Mammary epithelial cell (primary cell): ENCODE measurements at regions of chr18 and their contacts with region 1.

Region 1: DNA sequence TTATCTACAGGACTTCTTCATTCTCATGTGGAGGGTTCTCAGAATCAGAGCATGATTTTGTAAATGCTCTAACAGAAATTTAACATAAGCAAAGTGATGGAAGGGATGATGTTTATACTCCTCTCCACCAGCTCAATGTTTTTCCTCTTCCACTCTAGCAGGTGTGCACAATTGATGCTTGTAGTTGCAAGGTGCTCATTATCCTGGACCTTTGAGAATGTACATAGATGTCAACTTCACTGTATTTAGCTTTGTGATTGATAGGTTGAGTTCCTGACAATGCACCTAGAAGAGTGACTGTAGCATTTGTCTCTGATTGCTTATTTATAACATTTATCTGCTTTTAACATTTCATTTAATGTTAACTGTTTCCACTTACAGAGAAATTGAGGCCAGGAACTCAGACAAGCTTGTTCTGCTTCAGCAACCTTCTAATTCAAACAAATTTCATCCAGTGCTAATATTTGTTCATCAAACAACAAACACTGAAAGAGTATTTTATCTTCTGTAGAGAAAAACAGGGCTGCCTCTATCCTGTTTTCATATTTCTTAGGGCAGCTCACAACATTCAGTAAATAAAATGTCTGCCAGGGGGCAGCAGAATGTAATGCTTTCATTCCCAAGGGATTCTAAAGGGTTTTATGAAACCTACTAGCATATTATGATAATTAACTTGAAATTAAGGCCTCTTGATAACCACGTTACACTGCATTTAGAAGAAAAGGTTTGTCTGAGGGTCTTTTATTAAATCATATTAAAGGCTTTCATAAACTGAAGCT is 127.9 kb upstream of the NOL4 start:
- DNase-seq: no peak
- H3K4me3 ChIP-seq: no peak overlapping the region
- H3K27ac ChIP-seq: no peak overlapping the region
- H3K4me1 ChIP-seq: no peaks in the 10 kb centered on the region
- H3K27me3 ChIP-seq: no peaks in the 10 kb centered on the region
- CTCF ChIP-seq: peak in 1 of 2 donors; percentile 23

Region 2: DNA sequence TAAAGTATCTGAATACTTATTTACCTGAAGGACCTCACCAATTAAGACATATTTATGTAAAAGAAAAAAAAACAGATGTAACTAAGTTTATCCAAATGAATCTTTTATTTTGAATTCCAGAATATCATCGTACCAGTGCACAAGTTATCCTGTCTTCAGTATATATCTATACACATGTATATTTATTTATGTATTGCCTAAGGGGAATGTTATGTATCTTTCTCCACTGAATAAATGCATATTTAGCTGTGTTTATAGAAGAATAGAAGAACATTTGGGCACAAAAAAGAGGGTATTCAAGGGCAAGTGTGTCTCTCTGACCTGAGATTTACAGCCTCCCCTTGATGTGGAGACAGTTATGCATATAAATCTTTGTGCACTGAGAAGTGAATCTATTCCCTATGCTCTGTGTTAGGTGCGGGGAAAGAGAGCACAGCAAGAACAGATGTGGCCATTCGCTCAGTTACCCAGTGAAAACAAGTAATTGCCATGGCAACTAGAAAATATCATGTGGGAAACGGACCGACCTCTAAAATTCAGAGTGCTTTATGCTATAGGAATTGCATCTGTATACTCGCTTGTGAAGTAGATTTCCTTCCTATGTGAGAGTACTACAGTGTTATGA is 814.0 kb before region 1 on chr18:
- CTCF ChIA-PET with region 1: no interaction called
- dilution Hi-C with region 1: no loop called
- in situ Hi-C with region 1: no loop called
- intact Hi-C with region 1: no loop called
- DNase-seq: no peak
- H3K4me3 ChIP-seq: no peak overlapping the region
- H3K27ac ChIP-seq: no peak overlapping the region
- H3K4me1 ChIP-seq: no peaks in the 10 kb centered on the region
- H3K27me3 ChIP-seq: peaks cover 1% of the 10 kb centered on the region
- CTCF ChIP-seq: no peak

Region 3: GRCh38 chr18:34431042-34431441 is 78.5 kb after region 1 on chr18:
- CTCF ChIA-PET with region 1: no interaction called
- dilution Hi-C with region 1: no loop called
- in situ Hi-C with region 1: no loop called
- intact Hi-C with region 1: loop called (anchors 10 kb)
- DNase-seq: no peak
- H3K4me3 ChIP-seq: no peak overlapping the region
- H3K27ac ChIP-seq: no peak overlapping the region
- H3K4me1 ChIP-seq: no peaks in the 10 kb centered on the region
- H3K27me3 ChIP-seq: no peaks in the 10 kb centered on the region
- CTCF ChIP-seq: no peak

Region 4: DNA sequence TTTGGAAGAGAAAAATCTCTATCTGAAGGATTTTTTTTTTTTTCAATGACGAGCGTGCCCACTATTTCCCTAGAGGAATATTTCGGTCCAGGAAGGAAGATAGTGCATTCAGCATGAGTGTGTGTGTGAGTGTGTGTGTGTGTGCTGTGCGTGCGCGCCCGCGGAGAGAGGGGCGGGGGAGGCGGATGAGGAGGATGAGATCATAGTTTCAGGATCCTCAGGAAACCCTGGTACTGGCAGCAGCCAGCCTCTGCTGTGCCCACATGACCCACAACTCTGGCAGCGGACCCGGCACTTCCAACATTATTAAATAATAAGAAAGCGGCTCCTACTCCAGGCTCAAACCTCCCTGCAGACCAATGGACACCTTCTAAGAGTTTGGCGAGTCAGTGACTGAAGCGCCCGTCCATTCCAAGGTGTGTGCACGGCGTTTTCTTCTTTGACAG is 140.5 kb after region 1 on chr18:
- CTCF ChIA-PET with region 1: no interaction called
- dilution Hi-C with region 1: no loop called
- in situ Hi-C with region 1: no loop called
- intact Hi-C with region 1: loop called (anchors 10 kb)
- DNase-seq: peak; percentile 86
- H3K4me3 ChIP-seq: peak overlapping the region; percentile 45 to 63 (median 46)
- H3K27ac ChIP-seq: peak overlapping the region; percentile 15
- H3K4me1 ChIP-seq: no peaks in the 10 kb centered on the region
- H3K27me3 ChIP-seq: peaks cover 5% of the 10 kb centered on the region
- CTCF ChIP-seq: no peak